Naive thymus-derived CD4-positive, alpha-beta T cell (primary cell): ENCODE measurements at regions of chr1 and their contacts with region 1.

Region 1: DNA sequence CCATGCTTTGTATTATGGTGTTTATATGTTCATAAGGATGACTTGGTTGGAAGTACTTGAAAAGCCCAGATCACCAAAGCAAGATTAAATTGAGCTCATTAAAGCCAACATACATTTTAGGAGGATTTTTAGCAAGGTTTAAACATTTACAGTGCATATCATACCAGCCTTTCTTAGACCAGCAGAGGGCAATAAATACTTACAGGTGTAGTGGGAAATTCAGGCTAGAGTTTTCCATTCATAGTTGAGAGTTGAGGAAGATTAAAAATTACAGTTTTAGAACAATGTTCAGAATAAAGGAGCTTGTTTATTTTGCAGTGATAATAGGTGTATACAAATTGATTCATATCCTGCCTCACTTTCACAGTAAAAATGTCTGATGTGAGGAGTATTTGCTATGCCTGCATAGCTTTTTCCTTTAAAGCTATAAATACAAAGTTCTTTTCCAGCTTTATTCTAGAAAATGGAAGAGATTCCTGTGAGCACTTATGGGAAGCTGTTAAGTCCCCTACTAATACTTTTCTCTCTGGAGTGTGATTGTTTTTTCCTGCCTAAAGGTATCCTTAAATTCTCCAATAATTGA is 35.3 kb downstream of the DTL start:
- DNase-seq: peak in 7 of 9 donors; percentile 11 to 63 (median 47)
- ATAC-seq: peak; percentile 66
- H3K4me3 ChIP-seq: no peak overlapping the region
- H3K4me3 Mint-ChIP-seq: no peak overlapping the region
- H3K27ac ChIP-seq: no peak overlapping the region
- H3K27ac Mint-ChIP-seq: no peak overlapping the region
- H3K4me1 ChIP-seq: no peaks in the 10 kb centered on the region
- H3K4me1 Mint-ChIP-seq: peaks cover 0 to 7% (median 0%) of the 10 kb centered on the region in 7 donors
- H3K27me3 ChIP-seq: no peaks in the 10 kb centered on the region
- H3K27me3 Mint-ChIP-seq: no peaks in the 10 kb centered on the region

Region 2: GRCh38 chr1:211687446-211688215 is 383.2 kb before region 1 on chr1:
- CTCF ChIA-PET with region 1: no interaction called
- POLR2A ChIA-PET with region 1: no interaction called
- intact Hi-C with region 1: no loop called
- DNase-seq: no peak
- ATAC-seq: no peak
- H3K4me3 ChIP-seq: no peak overlapping the region
- H3K4me3 Mint-ChIP-seq: peak overlapping the region in 3 of 10 donors; percentile 24 to 70 (median 39)
- H3K27ac ChIP-seq: no peak overlapping the region
- H3K27ac Mint-ChIP-seq: peak overlapping the region in 3 of 9 donors; percentile 43 to 78 (median 55)
- H3K4me1 ChIP-seq: peaks cover 0 to 8% of the 10 kb centered on the region in 2 donors
- H3K4me1 Mint-ChIP-seq: peaks cover 0 to 16% (median 7%) of the 10 kb centered on the region in 7 donors
- H3K27me3 ChIP-seq: no peaks in the 10 kb centered on the region
- H3K27me3 Mint-ChIP-seq: peaks cover 0 to 20% (median 0%) of the 10 kb centered on the region in 5 donors

Region 3: GRCh38 chr1:212167098-212167497 is 96.3 kb after region 1 on chr1:
- CTCF ChIA-PET with region 1: no interaction called
- POLR2A ChIA-PET with region 1: no interaction called
- intact Hi-C with region 1: no loop called
- DNase-seq: no peak
- ATAC-seq: peak; percentile 76
- H3K4me3 ChIP-seq: no peak overlapping the region
- H3K4me3 Mint-ChIP-seq: no peak overlapping the region
- H3K27ac ChIP-seq: no peak overlapping the region
- H3K27ac Mint-ChIP-seq: no peak overlapping the region
- H3K4me1 ChIP-seq: peaks cover 4 to 13% of the 10 kb centered on the region in 2 donors
- H3K4me1 Mint-ChIP-seq: peaks cover 6 to 12% (median 8%) of the 10 kb centered on the region in 7 donors
- H3K27me3 ChIP-seq: no peaks in the 10 kb centered on the region
- H3K27me3 Mint-ChIP-seq: no peaks in the 10 kb centered on the region

Region 4: DNA sequence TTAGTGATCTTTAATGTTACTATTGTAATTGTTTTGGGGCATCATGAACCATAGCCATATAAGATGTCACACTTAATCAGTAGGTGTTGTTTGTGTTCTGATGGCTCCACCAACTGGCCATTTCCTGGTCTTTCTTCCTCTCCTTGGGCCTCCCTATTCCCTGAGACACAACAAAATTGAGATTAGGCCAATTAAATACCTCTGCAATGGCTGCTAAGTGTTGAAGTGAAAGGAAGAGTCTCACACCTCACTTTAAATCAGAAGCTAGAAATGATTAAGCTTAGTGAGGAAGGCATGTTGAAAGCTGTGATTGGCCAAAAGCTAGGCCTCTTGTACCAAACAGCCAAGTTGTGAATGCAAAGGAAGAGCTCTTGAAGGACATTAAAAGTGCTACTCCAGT is 245.1 kb after region 1 on chr1:
- CTCF ChIA-PET with region 1: interaction called, 10 read pairs
- POLR2A ChIA-PET with region 1: no interaction called
- intact Hi-C with region 1: loop called in 1 of 2 experiments (anchors 1 kb)
- DNase-seq: no peak
- ATAC-seq: no peak
- H3K4me3 ChIP-seq: no peak overlapping the region
- H3K4me3 Mint-ChIP-seq: peak overlapping the region in 6 of 10 donors; percentile 6 to 57 (median 37)
- H3K27ac ChIP-seq: no peak overlapping the region
- H3K27ac Mint-ChIP-seq: peak overlapping the region in 7 of 9 donors; percentile 19 to 79 (median 39)
- H3K4me1 ChIP-seq: peaks cover 0 to 6% of the 10 kb centered on the region in 2 donors
- H3K4me1 Mint-ChIP-seq: peaks cover 19 to 59% (median 47%) of the 10 kb centered on the region in 7 donors
- H3K27me3 ChIP-seq: no peaks in the 10 kb centered on the region
- H3K27me3 Mint-ChIP-seq: no peaks in the 10 kb centered on the region

Region 5: GRCh38 chr1:212368073-212368484 is 297.3 kb after region 1 on chr1:
- CTCF ChIA-PET with region 1: interaction called, 63 read pairs
- POLR2A ChIA-PET with region 1: no interaction called
- intact Hi-C with region 1: loop called (anchors 1 kb)
- DNase-seq: peak in 7 of 9 donors; percentile 34 to 67 (median 63)
- ATAC-seq: peak; percentile 95
- H3K4me3 ChIP-seq: no peak overlapping the region
- H3K4me3 Mint-ChIP-seq: no peak overlapping the region
- H3K27ac ChIP-seq: no peak overlapping the region
- H3K27ac Mint-ChIP-seq: peak overlapping the region in 4 of 9 donors; percentile 5 to 87 (median 52)
- H3K4me1 ChIP-seq: no peaks in the 10 kb centered on the region
- H3K4me1 Mint-ChIP-seq: peaks cover 0 to 9% (median 0%) of the 10 kb centered on the region in 7 donors
- H3K27me3 ChIP-seq: no peaks in the 10 kb centered on the region
- H3K27me3 Mint-ChIP-seq: no peaks in the 10 kb centered on the region